ENCODE measurements at regions of chr13 and their contacts with region 1.

Region 1: GRCh38 chr13:25232937-25233515 is 54.3 kb downstream of the MTMR6 start:
- DNase-seq: peak in 3 of 14 experiments; percentile 34 to 35 (median 34)
- ATAC-seq: peak; percentile 32
- H3K4me3 ChIP-seq: no peak overlapping the region
- H3K4me3 Mint-ChIP-seq: no peak overlapping the region
- H3K27ac ChIP-seq: no peak overlapping the region
- H3K27ac Mint-ChIP-seq: no peak overlapping the region
- H3K4me1 ChIP-seq: no peaks in the 10 kb centered on the region
- H3K4me1 Mint-ChIP-seq: peaks cover 8% of the 10 kb centered on the region
- H3K27me3 ChIP-seq: no peaks in the 10 kb centered on the region
- H3K27me3 Mint-ChIP-seq: peaks cover 13% of the 10 kb centered on the region
- CTCF ChIP-seq: peak; percentile 64

Region 2: GRCh38 chr13:25292301-25292700 is 59.3 kb after region 1 on chr13:
- CTCF ChIA-PET with region 1: no interaction called
- POLR2A ChIA-PET with region 1: no interaction called
- intact Hi-C with region 1: no loop called
- DNase-seq: peak in 5 of 14 experiments; percentile 17 to 71 (median 52)
- ATAC-seq: peak; percentile 66
- H3K4me3 ChIP-seq: no peak overlapping the region
- H3K4me3 Mint-ChIP-seq: no peak overlapping the region
- H3K27ac ChIP-seq: no peak overlapping the region
- H3K27ac Mint-ChIP-seq: peak overlapping the region; percentile 6
- H3K4me1 ChIP-seq: peaks cover 4% of the 10 kb centered on the region
- H3K4me1 Mint-ChIP-seq: peaks cover 5% of the 10 kb centered on the region
- H3K27me3 ChIP-seq: peaks cover 0 to 6% of the 10 kb centered on the region in 2 experiments
- H3K27me3 Mint-ChIP-seq: peaks cover 7% of the 10 kb centered on the region
- CTCF ChIP-seq: no peak

Region 3: GRCh38 chr13:25375727-25376358 is 142.8 kb after region 1 on chr13:
- CTCF ChIA-PET with region 1: no interaction called
- POLR2A ChIA-PET with region 1: no interaction called
- intact Hi-C with region 1: loop called (anchors 1 to 5 kb)
- DNase-seq: peak in 10 of 14 experiments; percentile 1 to 65 (median 16)
- ATAC-seq: peak; percentile 48
- H3K4me3 ChIP-seq: no peak overlapping the region
- H3K4me3 Mint-ChIP-seq: no peak overlapping the region
- H3K27ac ChIP-seq: no peak overlapping the region
- H3K27ac Mint-ChIP-seq: no peak overlapping the region
- H3K4me1 ChIP-seq: peaks cover 6% of the 10 kb centered on the region
- H3K4me1 Mint-ChIP-seq: peaks cover 7% of the 10 kb centered on the region
- H3K27me3 ChIP-seq: peaks cover 37 to 38% of the 10 kb centered on the region in 2 experiments
- H3K27me3 Mint-ChIP-seq: peaks cover 58% of the 10 kb centered on the region
- CTCF ChIP-seq: peak; percentile 74

Region 4: DNA sequence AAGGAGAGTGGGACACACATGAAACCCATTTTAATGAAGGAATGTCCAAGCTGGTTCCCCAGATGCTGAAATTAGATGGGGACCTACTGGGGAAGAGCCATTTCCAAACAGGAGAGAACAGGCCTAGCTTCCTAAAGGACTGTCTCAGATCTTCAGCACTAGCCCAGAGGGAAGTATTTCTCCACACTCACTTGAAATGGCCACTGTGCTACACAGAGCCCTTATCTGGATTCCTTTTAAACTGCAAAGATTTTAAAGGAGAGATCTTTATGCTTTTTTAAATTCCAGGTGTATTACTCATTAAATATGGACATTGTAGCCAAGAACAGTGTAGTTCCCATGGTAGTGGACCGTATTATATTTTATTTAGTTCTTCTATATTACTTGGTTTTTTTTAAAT is 563.4 kb after region 1 on chr13:
- CTCF ChIA-PET with region 1: no interaction called
- POLR2A ChIA-PET with region 1: no interaction called
- intact Hi-C with region 1: no loop called
- DNase-seq: no peak
- ATAC-seq: no peak
- H3K4me3 ChIP-seq: no peak overlapping the region
- H3K4me3 Mint-ChIP-seq: no peak overlapping the region
- H3K27ac ChIP-seq: no peak overlapping the region
- H3K27ac Mint-ChIP-seq: no peak overlapping the region
- H3K4me1 ChIP-seq: no peaks in the 10 kb centered on the region
- H3K4me1 Mint-ChIP-seq: no peaks in the 10 kb centered on the region
- H3K27me3 ChIP-seq: no peaks in the 10 kb centered on the region
- H3K27me3 Mint-ChIP-seq: peaks cover 6% of the 10 kb centered on the region
- CTCF ChIP-seq: no peak